AG04449 (cell line): ENCODE measurements at regions of chr5 and their contacts with region 1.

Region 1: GRCh38 chr5:139968547-139969261 is 74.4 kb downstream of the NRG2 start:
- DNase-seq: no peak
- H3K4me3 ChIP-seq: no peak overlapping the region
- CTCF ChIP-seq: peak; percentile 100

Region 2: DNA sequence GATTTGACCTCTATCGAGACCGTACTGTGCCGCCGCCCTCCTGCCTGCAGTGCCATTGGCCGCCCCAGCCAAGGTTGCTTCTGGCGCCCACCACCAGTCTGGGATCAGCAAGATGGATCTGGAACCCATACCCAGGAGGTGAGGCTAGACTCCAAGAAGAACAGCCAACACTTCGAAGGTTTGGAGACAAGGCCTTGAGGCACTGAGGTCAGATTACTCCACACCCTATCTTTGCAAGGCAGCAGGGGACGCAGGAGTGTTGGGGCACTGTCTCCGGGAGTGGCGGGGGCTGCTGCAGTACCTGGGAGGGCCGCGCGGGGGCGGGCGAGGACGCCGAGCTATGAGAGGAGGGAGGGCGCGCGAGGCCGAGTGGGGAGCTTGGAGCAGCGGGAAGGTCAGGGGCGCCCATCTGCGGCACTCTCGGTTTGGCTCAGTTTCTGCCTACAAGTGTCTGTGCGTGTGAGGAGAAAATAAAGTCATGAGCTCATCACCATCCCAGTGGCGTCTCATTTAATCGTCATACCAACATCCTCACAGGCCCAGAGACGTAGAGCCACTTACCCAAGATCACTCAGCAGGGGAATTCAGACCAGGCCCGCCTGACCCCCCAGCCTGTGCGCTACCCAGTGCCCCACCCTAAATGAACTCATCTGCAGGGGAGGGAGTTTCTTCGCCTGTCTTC is 193.6 kb before region 1 on chr5:
- CTCF ChIA-PET with region 1: interaction called, 97 read pairs
- POLR2A ChIA-PET with region 1: no interaction called
- DNase-seq: no peak
- H3K4me3 ChIP-seq: no peak overlapping the region
- CTCF ChIP-seq: peak; percentile 91

Region 3: DNA sequence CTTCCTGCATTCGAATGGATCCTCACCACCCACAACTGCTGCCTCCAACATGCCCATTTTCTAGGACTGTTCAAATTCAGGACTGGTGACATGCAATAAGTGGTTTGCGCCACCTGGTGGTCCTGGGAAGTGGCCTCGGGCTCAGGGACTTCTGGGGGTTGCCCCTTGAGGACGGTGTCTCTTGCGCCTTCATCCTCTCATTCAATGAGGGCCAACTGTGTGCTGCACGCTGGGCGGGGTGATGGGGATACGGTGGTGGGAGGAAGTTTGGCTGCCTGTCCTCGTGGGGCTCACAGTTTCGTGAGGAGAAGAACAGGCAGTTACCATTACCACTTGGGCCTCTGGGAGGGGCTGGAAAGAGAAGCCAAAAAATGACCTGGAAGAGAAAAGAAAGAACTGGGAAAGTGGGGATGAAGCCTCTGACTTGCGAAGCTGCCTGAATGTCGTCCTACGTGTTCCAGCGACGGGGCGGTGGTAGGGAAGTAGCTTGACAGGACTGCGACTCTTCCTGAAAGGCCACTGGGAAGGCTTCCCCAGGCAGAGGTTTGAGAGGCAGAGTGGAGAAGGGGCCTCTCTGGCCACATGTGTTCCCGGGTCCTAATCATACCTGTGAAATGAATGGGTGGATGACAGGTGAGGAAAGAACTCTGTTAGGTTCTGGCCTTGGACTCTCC is 124.1 kb before region 1 on chr5:
- CTCF ChIA-PET with region 1: interaction called, 26 read pairs
- POLR2A ChIA-PET with region 1: no interaction called
- DNase-seq: peak; percentile 10
- H3K4me3 ChIP-seq: no peak overlapping the region
- CTCF ChIP-seq: peak; percentile 86

Region 4: DNA sequence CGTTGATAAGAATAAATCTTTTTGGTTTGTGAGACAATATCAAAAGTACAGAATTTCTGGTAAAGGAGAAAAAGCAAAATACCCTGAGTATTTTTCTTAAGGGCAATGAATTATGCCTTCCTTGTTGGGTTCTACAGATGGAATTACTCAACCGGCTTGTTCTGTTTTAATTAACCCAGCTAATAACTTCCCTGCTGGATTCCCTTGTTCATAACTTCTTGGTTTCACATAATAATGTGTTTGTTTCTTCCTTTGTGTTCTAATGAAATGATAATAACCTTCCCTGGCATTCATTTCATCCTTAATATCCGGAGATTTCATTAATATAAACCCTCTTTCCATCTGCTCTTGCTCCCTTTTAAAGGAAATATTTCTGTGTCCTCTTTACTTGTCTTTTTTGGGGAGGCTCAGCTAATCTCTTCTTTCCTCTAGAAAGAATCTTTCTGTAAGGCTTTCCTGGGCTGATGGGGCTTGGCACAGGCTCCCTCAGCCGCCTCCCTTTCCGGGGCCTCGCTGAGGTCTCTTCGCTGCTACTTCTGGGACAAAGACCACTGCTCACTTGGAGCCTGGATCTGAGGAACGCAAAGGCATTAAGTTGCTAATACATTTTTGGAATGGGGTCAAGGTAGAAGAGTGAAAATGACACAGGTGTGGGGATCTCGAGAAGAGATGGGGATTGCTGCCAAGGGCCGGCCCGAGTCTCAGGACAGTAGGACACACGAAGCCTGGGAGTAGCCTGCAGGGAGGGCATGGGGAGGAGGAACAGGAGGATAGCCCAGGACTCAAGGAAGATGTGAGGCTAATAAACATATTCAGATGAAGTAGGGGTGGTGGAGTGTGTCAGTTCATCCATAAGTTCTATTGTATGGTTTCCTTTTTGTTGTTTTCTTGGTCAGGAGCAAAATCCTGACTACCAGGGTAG is 44.1 kb before region 1 on chr5:
- CTCF ChIA-PET with region 1: interaction called, 11 read pairs
- POLR2A ChIA-PET with region 1: no interaction called
- DNase-seq: no peak
- H3K4me3 ChIP-seq: no peak overlapping the region
- CTCF ChIP-seq: no peak

Region 5: GRCh38 chr5:139949710-139950109 is 19.0 kb before region 1 on chr5:
- CTCF ChIA-PET with region 1: interaction called, 84 read pairs
- POLR2A ChIA-PET with region 1: no interaction called
- DNase-seq: no peak
- H3K4me3 ChIP-seq: no peak overlapping the region
- CTCF ChIP-seq: no peak

Region 6: GRCh38 chr5:140131967-140132409 is 163.3 kb after region 1 on chr5:
- CTCF ChIA-PET with region 1: no interaction called
- POLR2A ChIA-PET with region 1: no interaction called
- DNase-seq: peak; percentile 80
- H3K4me3 ChIP-seq: no peak overlapping the region
- CTCF ChIP-seq: no peak